ENCODE measurements at regions of chr1 and their contacts with region 1.

Region 1: GRCh38 chr1:167553136-167554027 is at the start of gene CREG1:
- DNase-seq: peak; percentile 94
- ATAC-seq: peak; percentile 100
- H3K4me3 Mint-ChIP-seq: peak within 1 kb of the TSS; percentile 77
- H3K27ac Mint-ChIP-seq: peak within 1 kb of the TSS; percentile 38
- H3K4me1 Mint-ChIP-seq: peaks cover 33% of the 10 kb centered on the region
- H3K27me3 Mint-ChIP-seq: no peaks in the 10 kb centered on the region
- total RNA-seq, gene CREG1: 8.8 to 9.4 TPM

Region 2: DNA sequence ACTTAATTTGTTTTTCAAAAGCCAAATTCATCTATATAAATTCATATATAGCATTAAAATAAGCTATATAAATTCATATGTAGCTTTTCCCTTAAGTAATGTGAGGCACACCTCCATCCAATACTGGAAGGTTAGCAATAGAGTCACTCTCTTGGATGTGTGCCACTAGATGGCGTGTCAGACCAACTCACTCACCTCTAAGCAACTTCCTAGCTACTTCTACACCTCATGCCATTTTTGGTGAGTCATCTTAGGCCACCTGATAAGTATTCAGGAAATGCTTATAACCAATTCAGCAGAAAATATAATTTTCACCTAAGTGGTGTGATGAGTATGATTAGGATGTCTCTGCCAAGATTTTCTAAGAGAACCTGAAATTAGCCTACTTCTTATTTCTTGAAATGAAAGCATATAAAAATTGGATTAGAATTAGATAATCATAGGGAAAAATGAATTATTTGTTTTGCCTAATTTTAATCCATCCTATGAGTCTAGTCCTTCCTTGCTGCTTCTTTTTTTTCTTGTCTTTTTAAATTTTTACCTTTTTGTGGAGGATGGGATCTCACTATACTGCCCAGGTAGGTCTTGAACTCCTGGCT is 642.9 kb before region 1 on chr1:
- CTCF ChIA-PET with region 1: no interaction called
- POLR2A ChIA-PET with region 1: no interaction called
- intact Hi-C with region 1: loop called (anchors 5 to 10 kb)
- DNase-seq: peak; percentile 87
- ATAC-seq: peak; percentile 96
- H3K4me3 Mint-ChIP-seq: no peak overlapping the region
- H3K27ac Mint-ChIP-seq: no peak overlapping the region
- H3K4me1 Mint-ChIP-seq: peaks cover 13% of the 10 kb centered on the region
- H3K27me3 Mint-ChIP-seq: no peaks in the 10 kb centered on the region

Region 3: DNA sequence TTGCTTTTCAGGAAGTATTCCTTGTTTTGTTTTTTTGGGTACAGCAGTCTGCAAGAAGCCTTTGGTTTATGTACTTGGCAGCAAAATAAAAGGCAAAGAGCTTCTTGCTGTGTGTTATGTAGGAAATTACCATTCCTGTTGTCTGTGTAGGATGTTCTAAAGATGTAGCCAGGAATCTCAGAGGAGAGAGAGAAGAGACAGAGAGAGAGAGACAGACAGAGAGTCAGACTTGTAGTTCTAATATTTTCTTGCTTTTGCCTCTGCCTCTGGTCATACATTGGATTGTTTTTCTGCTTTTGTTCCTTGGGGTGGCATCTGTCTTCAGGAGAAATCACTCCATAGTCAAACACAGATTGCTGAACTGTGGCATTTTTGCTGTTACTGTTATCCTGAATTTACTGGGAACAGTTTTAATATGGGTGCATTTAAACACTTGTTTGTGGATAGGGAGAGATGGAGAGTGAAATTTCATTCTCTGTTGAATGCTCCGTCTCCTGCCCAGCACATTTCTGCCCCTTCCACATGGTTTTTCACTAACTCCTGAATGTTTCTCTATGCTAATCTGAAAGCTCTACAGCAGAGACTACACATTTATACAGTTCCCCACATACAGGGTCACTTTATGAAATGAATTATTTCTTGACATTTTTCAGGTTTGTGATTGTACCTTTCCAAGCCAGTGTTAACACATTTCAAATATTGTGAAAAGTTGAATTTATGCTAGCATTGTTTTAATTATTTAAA is 282.9 kb before region 1 on chr1:
- CTCF ChIA-PET with region 1: interaction called, 11 read pairs
- POLR2A ChIA-PET with region 1: no interaction called
- intact Hi-C with region 1: loop called in 1 of 2 experiments (anchors 1 kb)
- DNase-seq: no peak
- ATAC-seq: no peak
- H3K4me3 Mint-ChIP-seq: no peak overlapping the region
- H3K27ac Mint-ChIP-seq: no peak overlapping the region
- H3K4me1 Mint-ChIP-seq: peaks cover 41% of the 10 kb centered on the region
- H3K27me3 Mint-ChIP-seq: no peaks in the 10 kb centered on the region

Region 4: DNA sequence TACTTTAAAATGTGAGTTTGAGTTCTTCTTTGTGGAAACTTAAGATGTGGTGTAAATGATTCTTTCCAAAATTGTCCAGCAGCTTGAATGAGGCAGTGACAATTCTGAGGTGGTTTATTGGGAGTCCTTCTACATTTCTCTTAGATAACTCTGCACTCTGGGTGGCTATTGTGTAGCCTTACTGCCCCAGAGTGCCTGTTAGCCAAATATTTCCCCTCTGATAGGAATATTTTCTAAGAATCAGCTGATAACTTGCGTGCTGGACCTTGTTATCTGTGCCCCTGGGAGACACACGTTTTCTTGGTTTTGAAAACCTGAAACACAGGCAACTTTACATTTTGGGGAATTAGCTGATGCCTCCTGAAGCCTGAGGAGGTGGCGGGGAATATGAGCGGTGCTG is 126.7 kb before region 1 on chr1:
- CTCF ChIA-PET with region 1: no interaction called
- POLR2A ChIA-PET with region 1: no interaction called
- intact Hi-C with region 1: no loop called
- DNase-seq: no peak
- ATAC-seq: no peak
- H3K4me3 Mint-ChIP-seq: no peak overlapping the region
- H3K27ac Mint-ChIP-seq: no peak overlapping the region
- H3K4me1 Mint-ChIP-seq: peaks cover 28% of the 10 kb centered on the region
- H3K27me3 Mint-ChIP-seq: no peaks in the 10 kb centered on the region

Region 5: DNA sequence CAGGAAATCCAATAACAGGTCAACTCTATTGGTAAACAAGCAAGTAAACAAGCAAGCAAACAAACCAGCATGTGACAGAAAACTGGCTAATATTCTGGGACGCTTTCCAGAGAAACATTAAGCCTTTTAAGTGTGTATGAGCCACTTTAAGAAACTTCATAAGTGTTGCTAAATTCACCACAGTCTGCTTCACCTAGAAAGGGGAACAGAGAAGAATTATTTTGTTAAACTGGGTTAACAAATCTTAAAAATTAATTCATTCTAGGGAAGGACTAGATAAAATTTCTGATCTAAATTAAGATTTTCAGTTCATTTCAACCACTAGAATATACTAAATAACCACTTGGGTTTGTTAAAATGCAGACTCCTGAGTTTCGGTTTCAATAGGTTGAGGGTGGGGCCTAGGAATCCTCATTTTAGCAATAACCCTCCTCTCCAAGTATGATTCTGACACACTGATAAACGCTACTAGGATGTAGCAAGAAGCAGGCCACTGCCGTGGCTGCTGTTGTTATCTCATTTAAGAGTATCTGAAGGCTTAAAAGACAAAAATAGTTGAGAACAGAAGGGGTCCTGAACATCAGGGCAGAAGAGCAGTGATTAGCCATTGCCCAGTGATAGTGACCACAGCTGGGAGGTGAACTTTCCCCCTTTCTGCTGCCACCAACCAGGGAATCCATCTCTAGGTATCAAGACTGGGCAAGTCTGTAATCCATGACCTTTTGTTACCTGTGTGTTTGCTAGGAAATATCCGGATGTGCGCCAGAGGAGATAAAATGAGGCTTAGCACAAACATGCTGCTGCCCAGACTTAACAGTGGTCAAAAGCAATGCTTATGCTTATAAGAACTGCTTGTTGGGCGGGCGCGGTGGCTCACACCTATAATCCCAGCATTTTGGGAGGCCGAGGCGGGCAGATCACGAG is 11.0 kb before region 1 on chr1:
- CTCF ChIA-PET with region 1: interaction called, 36 read pairs
- POLR2A ChIA-PET with region 1: no interaction called
- intact Hi-C with region 1: no loop called
- DNase-seq: no peak
- ATAC-seq: peak; percentile 64
- H3K4me3 Mint-ChIP-seq: no peak overlapping the region
- H3K27ac Mint-ChIP-seq: peak overlapping the region; percentile 10
- H3K4me1 Mint-ChIP-seq: peaks cover 37% of the 10 kb centered on the region
- H3K27me3 Mint-ChIP-seq: no peaks in the 10 kb centered on the region

Region 6: GRCh38 chr1:167627865-167628641 is 74.7 kb after region 1 on chr1:
- CTCF ChIA-PET with region 1: interaction called, 5 read pairs
- POLR2A ChIA-PET with region 1: interaction called, 3 read pairs
- intact Hi-C with region 1: loop called (anchors 2 to 5 kb)
- DNase-seq: peak; percentile 87
- ATAC-seq: peak; percentile 85
- H3K4me3 Mint-ChIP-seq: peak overlapping the region; percentile 85
- H3K27ac Mint-ChIP-seq: peak overlapping the region; percentile 98
- H3K4me1 Mint-ChIP-seq: peaks cover 53% of the 10 kb centered on the region
- H3K27me3 Mint-ChIP-seq: no peaks in the 10 kb centered on the region

Region 7: DNA sequence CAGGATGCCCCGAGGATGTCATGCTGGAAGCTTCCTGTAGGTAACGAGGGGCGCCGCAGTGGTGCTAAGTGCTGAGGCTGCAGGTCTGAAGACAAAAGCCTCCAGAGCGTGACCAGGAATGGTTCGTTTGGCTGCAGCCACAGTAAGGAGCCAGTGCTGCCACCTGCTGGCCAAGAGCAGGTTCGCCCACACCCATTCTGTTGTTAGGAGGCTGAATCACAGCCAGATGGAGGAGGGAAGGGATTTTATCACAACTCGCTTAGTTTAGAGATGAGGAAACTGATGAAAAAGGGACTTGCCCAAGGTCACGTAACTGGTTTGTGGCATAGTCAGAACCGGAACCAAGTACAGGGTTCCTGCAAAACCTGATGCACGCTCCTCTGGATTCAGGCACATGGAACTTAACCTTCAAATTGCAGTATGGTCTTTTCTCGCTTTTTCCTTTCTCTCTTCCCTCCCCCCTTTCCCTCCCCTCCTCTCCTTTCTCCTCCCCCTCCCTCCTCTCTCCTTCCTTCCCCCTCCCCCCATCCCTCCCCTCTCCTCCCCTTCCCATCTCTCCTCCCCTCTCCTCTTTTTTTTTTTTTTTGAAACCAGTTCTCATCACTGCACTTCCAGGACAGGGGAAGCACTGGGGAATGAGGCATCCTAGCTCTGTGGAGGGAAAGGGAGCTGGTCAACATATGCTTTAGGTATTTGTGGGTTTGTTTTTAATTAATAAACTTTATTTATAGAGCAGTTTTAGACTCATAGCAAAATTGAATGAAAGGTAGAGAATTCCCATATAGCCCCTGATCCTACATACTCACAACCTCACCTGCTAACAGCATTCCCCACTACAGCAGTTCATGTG is 250.2 kb after region 1 on chr1:
- CTCF ChIA-PET with region 1: no interaction called
- POLR2A ChIA-PET with region 1: no interaction called
- intact Hi-C with region 1: loop called in 1 of 2 experiments (anchors 1 kb)
- DNase-seq: peak; percentile 96
- ATAC-seq: peak; percentile 94
- H3K4me3 Mint-ChIP-seq: peak overlapping the region; percentile 64
- H3K27ac Mint-ChIP-seq: peak overlapping the region; percentile 97
- H3K4me1 Mint-ChIP-seq: peaks cover 24% of the 10 kb centered on the region
- H3K27me3 Mint-ChIP-seq: peaks cover under 1% of the 10 kb centered on the region